CD14-positive monocyte (primary cell): ENCODE measurements at regions of chr12 and their contacts with region 1.

Region 1: GRCh38 chr12:54300732-54301427 is at the start of gene NFE2:
- DNase-seq: peak; percentile 65 to 75 (median 66)
- H3K4me3 ChIP-seq: peak within 1 kb of the TSS; percentile 80 to 99 (median 93)
- H3K4me3 Mint-ChIP-seq: peak within 1 kb of the TSS; percentile 86 to 99
- H3K27ac ChIP-seq: peak within 1 kb of the TSS; percentile 63 to 87
- H3K27ac Mint-ChIP-seq: peak within 1 kb of the TSS; percentile 90 to 93 (median 91)
- H3K4me1 ChIP-seq: peaks cover 84 to 97% of the 10 kb centered on the region in 2 donors
- H3K4me1 Mint-ChIP-seq: peaks cover 79% of the 10 kb centered on the region
- H3K27me3 ChIP-seq: no peaks in the 10 kb centered on the region
- H3K27me3 Mint-ChIP-seq: peaks cover 0 to 1% (median 1%) of the 10 kb centered on the region in 3 donors
- CTCF ChIP-seq: no peak
- polyA plus RNA-seq, gene NFE2: 79.5 to 157 (median 95.6) TPM

Region 2: GRCh38 chr12:54324617-54325441 is 23.9 kb after region 1 on chr12 and contains the start of gene COPZ1:
- intact Hi-C with region 1: loop called (anchors 2 to 5 kb)
- DNase-seq: peak; percentile 98 to 99 (median 99)
- H3K4me3 ChIP-seq: peak within 1 kb of the TSS; percentile 50 to 96 (median 79)
- H3K4me3 Mint-ChIP-seq: peak within 1 kb of the TSS; percentile 95 to 99
- H3K27ac ChIP-seq: peak within 1 kb of the TSS; percentile 67 to 86
- H3K27ac Mint-ChIP-seq: peak within 1 kb of the TSS; percentile 98 to 99 (median 99)
- H3K4me1 ChIP-seq: peaks cover 49 to 68% of the 10 kb centered on the region in 2 donors
- H3K4me1 Mint-ChIP-seq: peaks cover 57% of the 10 kb centered on the region
- H3K27me3 ChIP-seq: no peaks in the 10 kb centered on the region
- H3K27me3 Mint-ChIP-seq: no peaks in the 10 kb centered on the region
- CTCF ChIP-seq: peak; percentile 87
- polyA plus RNA-seq, gene COPZ1: 78.9 to 190 (median 176) TPM